ENCODE measurements at regions of chr19 and their contacts with region 1.

Region 1: GRCh38 chr19:57978586-57979289 is 4.4 kb upstream of the C19orf18 start:
- DNase-seq: no peak
- ATAC-seq: no peak

Region 2: DNA sequence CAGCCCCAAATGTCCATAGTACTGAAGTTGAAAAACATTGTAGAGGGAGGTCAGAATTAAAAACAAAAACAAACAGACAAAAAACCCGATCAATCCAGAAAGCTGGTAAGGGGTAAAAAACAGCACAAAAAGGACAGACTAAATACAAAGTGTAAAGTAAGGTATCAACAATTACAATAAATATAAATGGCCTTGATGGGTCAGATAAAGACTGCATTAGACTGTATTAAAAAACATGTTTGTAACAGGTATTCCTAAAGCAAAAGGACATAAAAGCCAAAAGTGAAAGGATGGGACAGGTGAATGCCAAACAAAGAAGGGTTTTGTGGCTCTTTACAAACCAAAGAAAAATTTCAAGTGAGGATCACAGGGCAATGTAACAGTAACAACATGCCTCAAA is 155.5 kb after region 1 on chr19:
- intact Hi-C with region 1: loop called (anchors 10 kb)
- DNase-seq: no peak
- ATAC-seq: no peak